Activated CD4-positive, alpha-beta T cell treated with anti-CD3 and anti-CD28 coated beads for 36 hours (primary cell): ENCODE measurements at regions of chr7 and their contacts with region 1.

Region 1: DNA sequence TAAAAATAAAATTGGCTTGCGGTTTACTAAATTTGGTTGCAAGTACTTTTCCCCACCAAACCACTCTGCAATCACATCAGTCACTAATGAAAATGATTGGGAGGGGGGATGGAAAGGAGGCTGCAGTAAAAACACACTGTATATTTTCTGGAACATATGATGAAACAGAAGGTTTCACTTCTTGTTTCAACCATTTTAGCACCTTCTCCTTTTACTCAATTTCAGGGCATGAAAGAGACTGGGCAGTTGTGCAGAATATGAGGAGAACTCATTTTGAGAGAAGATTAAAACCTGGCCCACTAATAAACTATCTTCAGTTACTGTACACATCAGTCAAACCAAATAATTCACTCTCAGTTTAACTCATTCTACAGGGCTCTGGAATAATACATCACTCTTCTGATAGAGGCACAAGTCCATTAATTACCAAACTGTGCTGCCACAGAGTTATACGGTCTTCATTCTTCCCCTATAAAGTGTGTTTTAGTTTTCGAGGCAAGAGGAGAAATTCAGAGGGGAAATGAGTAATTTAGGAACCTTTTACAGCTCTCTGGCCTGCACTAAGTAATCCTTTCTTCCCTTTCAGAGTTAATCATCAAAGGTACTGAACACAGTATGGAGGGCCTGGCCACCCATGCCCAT is 25.5 kb downstream of the JAZF1 start:
- DNase-seq: peak; percentile 15
- ATAC-seq: peak; percentile 68
- H3K4me3 Mint-ChIP-seq: no peak overlapping the region
- H3K27ac Mint-ChIP-seq: peak overlapping the region; percentile 77
- H3K4me1 Mint-ChIP-seq: peaks cover 65% of the 10 kb centered on the region
- H3K27me3 Mint-ChIP-seq: no peaks in the 10 kb centered on the region

Region 2: DNA sequence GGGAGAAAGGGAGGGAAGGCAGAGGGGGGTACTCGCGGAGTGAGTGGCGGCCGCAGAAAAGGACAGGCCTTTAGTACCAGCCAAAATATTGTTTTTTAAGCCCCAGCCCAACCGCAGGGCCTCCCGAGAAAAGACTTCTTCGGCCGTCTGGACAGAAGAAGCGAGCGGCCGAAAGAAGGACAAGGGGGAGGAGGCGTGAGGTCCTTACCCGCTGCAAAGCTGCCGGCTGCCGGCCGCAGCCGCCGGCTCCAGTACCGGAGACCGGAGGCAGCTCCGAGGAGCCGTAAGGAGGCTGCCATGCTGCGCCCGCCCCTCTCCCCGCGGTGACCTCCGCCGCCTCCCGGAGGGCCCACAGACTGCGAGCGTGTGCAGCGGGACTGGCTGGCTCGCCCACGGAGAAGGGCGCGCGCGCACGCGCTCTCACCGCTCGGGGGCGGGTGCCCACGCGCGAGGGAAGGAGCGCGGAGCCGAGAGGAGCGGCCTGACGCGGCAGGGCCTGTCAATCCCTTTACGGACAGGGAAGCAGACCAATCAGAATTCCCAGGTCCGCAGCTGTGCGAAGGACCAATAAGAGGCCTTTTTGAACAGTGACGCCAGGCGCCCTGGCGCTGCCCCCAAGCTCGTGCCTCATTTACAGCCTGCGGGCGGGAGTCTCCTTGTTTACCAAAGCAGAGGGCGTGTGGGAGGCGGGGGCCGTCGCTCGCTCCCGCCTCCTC is 492.5 kb before region 1 on chr7 and contains the start of gene HIBADH:
- CTCF ChIA-PET with region 1: no interaction called
- POLR2A ChIA-PET with region 1: no interaction called
- intact Hi-C with region 1: loop called in 1 of 2 experiments (anchors 5 kb)
- DNase-seq: peak; percentile 95
- ATAC-seq: peak; percentile 99
- H3K4me3 Mint-ChIP-seq: peak within 1 kb of the TSS; percentile 82
- H3K27ac Mint-ChIP-seq: peak within 1 kb of the TSS; percentile 74
- H3K4me1 Mint-ChIP-seq: peaks cover 8% of the 10 kb centered on the region
- H3K27me3 Mint-ChIP-seq: no peaks in the 10 kb centered on the region
- total RNA-seq, gene HIBADH: 20.3 to 20.5 TPM

Region 3: GRCh38 chr7:27784393-27785053 is 370.6 kb before region 1 on chr7:
- CTCF ChIA-PET with region 1: no interaction called
- POLR2A ChIA-PET with region 1: no interaction called
- intact Hi-C with region 1: loop called in 1 of 2 experiments (anchors 5 kb)
- DNase-seq: peak; percentile 18
- ATAC-seq: peak; percentile 77
- H3K4me3 Mint-ChIP-seq: no peak overlapping the region
- H3K27ac Mint-ChIP-seq: no peak overlapping the region
- H3K4me1 Mint-ChIP-seq: peaks cover 31% of the 10 kb centered on the region
- H3K27me3 Mint-ChIP-seq: no peaks in the 10 kb centered on the region

Region 4: DNA sequence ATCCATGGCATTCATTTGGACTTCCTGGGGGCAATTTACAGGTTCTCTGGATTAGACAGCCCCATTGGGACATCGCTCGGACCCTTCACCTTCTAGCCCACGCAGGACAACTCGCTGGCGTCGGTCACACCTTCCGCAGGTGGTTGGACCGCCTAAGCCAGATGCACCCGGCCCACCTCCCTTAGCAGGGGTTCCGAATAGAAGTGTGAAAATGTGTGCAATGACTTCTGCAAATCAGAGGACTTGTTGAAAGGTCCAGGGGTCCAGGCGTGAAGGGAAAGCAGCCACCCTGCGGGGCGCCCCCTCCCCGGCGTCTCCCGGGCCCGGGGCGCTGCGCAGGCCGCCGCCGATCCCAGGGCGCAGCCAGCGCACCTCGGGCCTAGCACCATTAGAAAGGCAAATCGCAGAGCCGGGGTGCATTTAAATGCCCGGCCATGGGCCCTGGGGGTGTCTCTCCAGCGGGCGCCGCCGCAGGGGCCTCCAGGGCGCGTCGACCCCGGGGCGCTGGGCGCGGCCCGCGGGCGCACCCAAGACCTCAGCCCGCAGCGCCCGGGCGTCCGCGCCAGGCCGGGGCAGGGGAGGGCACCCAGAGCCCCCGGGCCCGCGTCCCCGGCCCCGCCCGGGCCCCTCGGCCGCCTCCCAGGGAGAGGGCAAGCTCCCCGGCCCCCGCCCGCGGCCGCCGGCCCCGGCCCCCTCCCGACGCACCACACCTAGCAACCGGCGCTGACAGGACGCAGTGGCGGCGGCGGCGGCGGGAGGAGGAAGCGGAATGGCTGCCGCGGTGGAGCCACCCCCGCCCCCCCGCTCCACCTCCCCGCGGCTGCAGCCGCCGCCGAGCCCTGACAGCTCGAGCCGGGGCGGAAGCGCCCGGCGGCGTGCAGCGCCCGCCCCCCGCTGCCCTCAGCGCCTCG is 24.2 kb after region 1 on chr7:
- CTCF ChIA-PET with region 1: interaction called, 3 read pairs
- POLR2A ChIA-PET with region 1: interaction called, 4 read pairs
- intact Hi-C with region 1: loop called (anchors 1 kb)
- DNase-seq: peak; percentile 76
- ATAC-seq: peak; percentile 68
- H3K4me3 Mint-ChIP-seq: peak overlapping the region; percentile 63
- H3K27ac Mint-ChIP-seq: peak overlapping the region; percentile 55
- H3K4me1 Mint-ChIP-seq: peaks cover 40% of the 10 kb centered on the region
- H3K27me3 Mint-ChIP-seq: peaks cover 2% of the 10 kb centered on the region

Region 5: GRCh38 chr7:28239823-28240204 is 84.7 kb after region 1 on chr7:
- CTCF ChIA-PET with region 1: no interaction called
- POLR2A ChIA-PET with region 1: no interaction called
- intact Hi-C with region 1: loop called (anchors 1 kb)
- DNase-seq: peak; percentile 22
- ATAC-seq: peak; percentile 79
- H3K4me3 Mint-ChIP-seq: no peak overlapping the region
- H3K27ac Mint-ChIP-seq: no peak overlapping the region
- H3K4me1 Mint-ChIP-seq: peaks cover 13% of the 10 kb centered on the region
- H3K27me3 Mint-ChIP-seq: peaks cover 34% of the 10 kb centered on the region

Region 6: DNA sequence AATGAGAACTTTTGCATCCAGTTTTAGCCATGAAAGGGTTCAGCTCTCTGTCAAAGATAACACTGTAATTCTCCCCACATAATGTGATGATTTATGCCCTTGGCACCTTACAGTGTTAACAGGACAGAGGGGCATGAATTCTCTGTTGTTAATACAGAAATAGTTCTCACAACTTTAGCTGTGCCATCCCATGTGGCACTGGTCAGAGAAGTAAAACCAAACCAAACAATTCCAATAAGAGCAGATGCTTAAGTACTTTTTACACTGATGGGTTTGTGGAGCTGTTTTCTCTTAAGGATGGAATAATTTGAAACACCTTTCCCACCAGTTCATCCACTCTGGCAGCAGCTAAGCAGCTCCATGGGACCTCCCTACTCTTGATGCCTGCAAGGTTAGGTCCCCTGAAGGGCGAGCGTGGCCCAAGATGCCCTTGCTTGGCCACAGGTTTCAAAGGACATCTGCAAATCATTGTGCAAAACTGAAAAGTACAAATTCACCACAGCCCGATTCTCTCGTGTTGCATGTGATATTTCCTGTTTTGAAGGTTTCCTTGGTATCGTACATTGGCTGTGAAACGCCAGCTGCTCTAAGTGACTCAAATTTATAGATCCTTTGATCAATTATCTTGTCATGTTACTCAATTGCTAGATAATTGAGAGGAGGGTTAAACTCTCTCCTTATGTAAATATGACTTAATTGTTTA is 174.7 kb after region 1 on chr7:
- CTCF ChIA-PET with region 1: no interaction called
- POLR2A ChIA-PET with region 1: no interaction called
- intact Hi-C with region 1: loop called in 1 of 2 experiments (anchors 1 kb)
- DNase-seq: peak; percentile 26
- ATAC-seq: peak; percentile 56
- H3K4me3 Mint-ChIP-seq: peak overlapping the region; percentile 4
- H3K27ac Mint-ChIP-seq: no peak overlapping the region
- H3K4me1 Mint-ChIP-seq: peaks cover 36% of the 10 kb centered on the region
- H3K27me3 Mint-ChIP-seq: peaks cover 6% of the 10 kb centered on the region

Region 7: GRCh38 chr7:28442540-28443420 is 287.6 kb after region 1 on chr7:
- CTCF ChIA-PET with region 1: no interaction called
- POLR2A ChIA-PET with region 1: no interaction called
- intact Hi-C with region 1: loop called (anchors 1 kb)
- DNase-seq: peak; percentile 10
- ATAC-seq: peak; percentile 84
- H3K4me3 Mint-ChIP-seq: no peak overlapping the region
- H3K27ac Mint-ChIP-seq: no peak overlapping the region
- H3K4me1 Mint-ChIP-seq: peaks cover 16% of the 10 kb centered on the region
- H3K27me3 Mint-ChIP-seq: peaks cover 48% of the 10 kb centered on the region